A673 (cell line): ENCODE measurements at regions of chr19 and their contacts with region 1.

Region 1: DNA sequence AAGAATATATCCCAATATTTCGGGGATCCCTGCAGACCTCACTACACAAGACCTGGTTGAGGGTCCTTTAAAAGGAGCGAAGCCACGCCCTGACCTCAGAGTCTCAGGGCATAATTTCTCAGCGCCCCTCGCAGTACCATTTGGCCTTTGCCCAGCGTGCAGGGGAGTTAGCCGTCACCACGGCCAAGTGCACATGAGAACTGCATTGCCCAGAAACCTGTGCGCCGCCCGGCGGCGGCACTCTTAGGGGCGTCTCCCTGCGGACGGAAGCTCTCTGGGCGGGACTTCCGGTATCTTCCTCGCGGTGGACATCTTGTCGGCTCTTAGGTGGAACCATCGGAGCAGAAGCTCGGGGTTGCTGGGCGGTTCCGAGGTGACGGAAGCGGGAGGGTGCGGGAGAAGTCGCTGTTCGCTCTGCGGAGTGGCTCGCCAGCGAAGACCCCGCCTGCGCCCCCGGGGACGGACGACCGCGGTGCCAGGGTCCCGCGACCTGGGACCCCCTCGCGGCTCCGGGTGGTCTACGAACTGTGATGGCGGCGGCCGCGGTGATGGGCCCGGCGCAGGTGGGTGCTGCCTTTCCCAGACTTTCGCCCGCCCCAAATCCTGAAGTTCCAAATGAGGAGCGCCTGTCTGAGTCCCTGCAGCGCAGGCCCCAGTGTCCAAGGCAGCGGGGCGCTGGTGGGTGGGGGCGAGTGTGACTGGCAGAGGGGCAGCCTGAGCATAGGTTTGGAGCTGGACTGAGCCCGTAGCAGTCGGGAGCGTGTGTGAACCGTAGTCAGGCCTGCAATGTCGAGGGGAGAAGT is at the start of gene ZNF134:
- DNase-seq: peak; percentile 96
- H3K4me3 ChIP-seq: peak within 1 kb of the TSS; percentile 85
- H3K27ac ChIP-seq: peak within 1 kb of the TSS; percentile 79
- H3K4me1 ChIP-seq: no peaks in the 10 kb centered on the region
- H3K27me3 ChIP-seq: no peaks in the 10 kb centered on the region
- CTCF ChIP-seq: no peak
- total RNA-seq, gene ZNF134: 24.3 and 24.7 TPM in 2 replicates

Region 2: GRCh38 chr19:57075125-57075524 is 539.0 kb before region 1 on chr19:
- CTCF ChIA-PET with region 1: no interaction called
- POLR2A ChIA-PET with region 1: interaction called, 21 read pairs
- intact Hi-C with region 1: no loop called
- DNase-seq: peak; percentile 35
- H3K4me3 ChIP-seq: no peak overlapping the region
- H3K27ac ChIP-seq: no peak overlapping the region
- H3K4me1 ChIP-seq: no peaks in the 10 kb centered on the region
- H3K27me3 ChIP-seq: no peaks in the 10 kb centered on the region
- CTCF ChIP-seq: no peak